Heart right ventricle (tissue), 16 donors: ENCODE measurements at regions of chr4 and their contacts with region 1.

Region 1: GRCh38 chr4:123390846-123391456 is 5.6 kb upstream of the SPRY1 start:
- DNase-seq: no peak
- ATAC-seq: no peak
- H3K4me3 ChIP-seq: no peak overlapping the region
- H3K27ac ChIP-seq: peak overlapping the region in 1 of 10 donors; percentile 26
- H3K4me1 ChIP-seq: peaks cover 0 to 16% (median 12%) of the 10 kb centered on the region in 9 donors
- H3K27me3 ChIP-seq: no peaks in the 10 kb centered on the region
- CTCF ChIP-seq: peak; percentile 25 to 73 (median 59)

Region 2: GRCh38 chr4:123340381-123340701 is 50.6 kb before region 1 on chr4:
- intact Hi-C with region 1: loop called in 2 of 10 experiments (anchors 2 to 5 kb)
- DNase-seq: no peak
- ATAC-seq: peak; percentile 19 to 86 (median 82)
- H3K4me3 ChIP-seq: no peak overlapping the region
- H3K27ac ChIP-seq: peak overlapping the region; percentile 63 to 87 (median 77)
- H3K4me1 ChIP-seq: peaks cover 3 to 60% (median 27%) of the 10 kb centered on the region in 9 donors
- H3K27me3 ChIP-seq: no peaks in the 10 kb centered on the region
- CTCF ChIP-seq: no peak